ENCODE measurements at regions of chr2 and their contacts with region 1.

Region 1: GRCh38 chr2:119223521-119224390 is at the start of gene STEAP3:
- DNase-seq: peak; percentile 86 to 88
- H3K4me3 ChIP-seq: peak within 1 kb of the TSS; percentile 10 to 73 (median 43)
- H3K27ac ChIP-seq: peak within 1 kb of the TSS in 2 of 3 donors; percentile 12 to 42
- H3K4me1 ChIP-seq: peaks cover 11 to 28% of the 10 kb centered on the region in 2 donors
- H3K27me3 ChIP-seq: no peaks in the 10 kb centered on the region
- CTCF ChIP-seq: no peak
- POLR2A ChIP-seq: peak in 1 of 2 donors; percentile 60
- total RNA-seq, gene STEAP3: 7.4 to 23.2 (median 12.0) TPM

Region 2: DNA sequence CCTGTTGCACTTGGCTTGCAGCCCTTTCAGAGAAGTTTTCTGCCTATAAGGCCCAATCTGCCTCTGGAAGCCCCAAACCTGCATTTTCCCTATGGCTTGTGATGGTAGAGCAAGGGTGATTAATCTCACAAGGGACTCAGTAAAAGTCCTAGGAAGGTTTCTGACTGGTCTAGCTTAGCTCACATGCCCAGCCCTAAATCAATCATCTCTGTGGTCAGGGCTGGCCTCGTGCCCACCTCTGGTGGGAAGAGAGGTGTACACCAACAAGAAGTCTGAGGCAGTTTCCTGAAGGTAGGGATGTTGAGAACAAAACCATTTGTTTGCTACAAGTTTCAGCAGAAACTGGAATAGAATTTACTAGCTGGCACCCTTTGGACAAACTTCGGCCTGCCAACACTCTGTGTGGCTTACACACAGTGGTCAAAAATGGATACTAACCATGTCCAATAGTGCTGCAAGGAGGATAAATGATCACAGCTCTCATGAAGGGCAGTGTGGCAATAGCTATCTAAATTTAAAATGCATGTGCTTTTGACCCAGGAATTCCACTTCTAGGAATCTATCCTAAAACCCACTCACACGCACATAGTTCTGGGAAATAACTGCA is 472.7 kb before region 1 on chr2:
- intact Hi-C with region 1: no loop called
- DNase-seq: no peak
- H3K4me3 ChIP-seq: no peak overlapping the region
- H3K27ac ChIP-seq: no peak overlapping the region
- H3K4me1 ChIP-seq: no peaks in the 10 kb centered on the region
- H3K27me3 ChIP-seq: no peaks in the 10 kb centered on the region
- CTCF ChIP-seq: no peak
- POLR2A ChIP-seq: no peak

Region 3: GRCh38 chr2:119289093-119289492 is 65.3 kb after region 1 on chr2:
- intact Hi-C with region 1: loop called (anchors 5 kb)
- DNase-seq: no peak
- H3K4me3 ChIP-seq: no peak overlapping the region
- H3K27ac ChIP-seq: no peak overlapping the region
- H3K4me1 ChIP-seq: peaks cover 14 to 21% of the 10 kb centered on the region in 2 donors
- H3K27me3 ChIP-seq: no peaks in the 10 kb centered on the region
- CTCF ChIP-seq: no peak
- POLR2A ChIP-seq: no peak

Region 4: DNA sequence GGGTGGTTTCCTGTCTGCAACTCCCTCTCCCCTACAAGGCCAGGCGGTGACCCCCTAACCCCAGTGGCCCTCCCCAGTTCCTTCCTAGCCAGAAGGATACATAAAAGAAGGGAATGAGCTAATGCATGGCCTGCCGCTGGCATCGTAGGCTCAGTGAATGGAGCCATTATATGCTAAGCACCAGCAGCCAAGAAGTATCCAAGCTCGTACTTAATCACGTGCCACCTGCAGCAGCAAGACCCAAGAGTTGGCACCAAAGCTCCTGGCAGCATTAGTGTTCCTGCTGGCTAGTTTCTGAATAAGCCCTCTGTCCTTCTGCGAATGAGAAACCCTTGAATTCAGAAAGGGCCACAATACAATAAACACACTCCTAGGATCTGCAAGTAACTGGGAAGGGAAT is 147.4 kb after region 1 on chr2:
- intact Hi-C with region 1: no loop called
- DNase-seq: peak; percentile 6 to 47
- H3K4me3 ChIP-seq: no peak overlapping the region
- H3K27ac ChIP-seq: no peak overlapping the region
- H3K4me1 ChIP-seq: peaks cover 7 to 10% of the 10 kb centered on the region in 2 donors
- H3K27me3 ChIP-seq: no peaks in the 10 kb centered on the region
- CTCF ChIP-seq: no peak
- POLR2A ChIP-seq: no peak